Activated CD4-positive, alpha-beta T cell treated with anti-CD3 and anti-CD28 coated beads for 36 hours (primary cell): ENCODE measurements at regions of chr4 and their contacts with region 1.

Region 1: DNA sequence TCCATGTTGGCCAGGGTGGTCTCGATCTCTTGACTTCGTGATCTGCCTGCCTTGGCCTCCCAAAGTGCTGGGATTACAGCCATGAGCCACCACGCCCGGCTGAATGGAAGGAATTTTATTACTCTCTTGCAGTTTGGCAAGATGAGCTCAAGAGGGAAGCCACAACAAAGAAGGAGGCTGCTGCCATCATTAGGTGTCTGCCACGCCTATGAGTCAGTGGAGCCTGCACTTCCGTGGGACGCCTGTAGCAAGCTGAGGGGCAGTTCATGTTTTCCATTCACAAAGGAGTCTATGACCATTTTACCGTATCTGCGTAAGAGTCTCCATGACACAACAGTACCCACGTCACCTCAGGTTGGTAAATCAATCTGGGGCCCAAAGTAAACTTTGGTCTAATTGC is 51.2 kb upstream of the CHRNA9 start:
- DNase-seq: peak; percentile 89
- ATAC-seq: peak; percentile 94
- H3K4me3 Mint-ChIP-seq: peak overlapping the region; percentile 38
- H3K27ac Mint-ChIP-seq: peak overlapping the region; percentile 96
- H3K4me1 Mint-ChIP-seq: peaks cover 60% of the 10 kb centered on the region
- H3K27me3 Mint-ChIP-seq: no peaks in the 10 kb centered on the region

Region 2: DNA sequence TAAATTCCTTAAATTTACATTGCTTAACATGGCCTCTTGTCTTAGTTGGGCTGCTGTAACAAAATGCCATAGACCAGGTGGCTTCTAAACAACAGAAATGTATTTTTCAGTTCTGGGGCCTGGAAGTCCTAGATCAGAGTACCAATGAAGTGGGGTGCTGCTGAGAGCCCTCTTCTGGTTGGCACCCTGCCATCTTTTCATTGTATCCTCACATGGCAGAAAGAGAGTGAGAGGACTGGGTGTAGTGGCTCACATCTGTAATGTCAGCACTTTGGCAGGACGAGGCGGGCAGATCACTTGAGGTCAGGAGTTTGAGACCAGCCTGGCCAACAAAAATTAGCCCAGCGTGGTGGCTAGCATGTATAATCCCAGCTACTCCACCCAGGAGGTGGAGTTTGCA is 889.3 kb before region 1 on chr4:
- CTCF ChIA-PET with region 1: no interaction called
- POLR2A ChIA-PET with region 1: no interaction called
- intact Hi-C with region 1: no loop called
- DNase-seq: no peak
- ATAC-seq: no peak
- H3K4me3 Mint-ChIP-seq: no peak overlapping the region
- H3K27ac Mint-ChIP-seq: no peak overlapping the region
- H3K4me1 Mint-ChIP-seq: no peaks in the 10 kb centered on the region
- H3K27me3 Mint-ChIP-seq: peaks cover 3% of the 10 kb centered on the region

Region 3: DNA sequence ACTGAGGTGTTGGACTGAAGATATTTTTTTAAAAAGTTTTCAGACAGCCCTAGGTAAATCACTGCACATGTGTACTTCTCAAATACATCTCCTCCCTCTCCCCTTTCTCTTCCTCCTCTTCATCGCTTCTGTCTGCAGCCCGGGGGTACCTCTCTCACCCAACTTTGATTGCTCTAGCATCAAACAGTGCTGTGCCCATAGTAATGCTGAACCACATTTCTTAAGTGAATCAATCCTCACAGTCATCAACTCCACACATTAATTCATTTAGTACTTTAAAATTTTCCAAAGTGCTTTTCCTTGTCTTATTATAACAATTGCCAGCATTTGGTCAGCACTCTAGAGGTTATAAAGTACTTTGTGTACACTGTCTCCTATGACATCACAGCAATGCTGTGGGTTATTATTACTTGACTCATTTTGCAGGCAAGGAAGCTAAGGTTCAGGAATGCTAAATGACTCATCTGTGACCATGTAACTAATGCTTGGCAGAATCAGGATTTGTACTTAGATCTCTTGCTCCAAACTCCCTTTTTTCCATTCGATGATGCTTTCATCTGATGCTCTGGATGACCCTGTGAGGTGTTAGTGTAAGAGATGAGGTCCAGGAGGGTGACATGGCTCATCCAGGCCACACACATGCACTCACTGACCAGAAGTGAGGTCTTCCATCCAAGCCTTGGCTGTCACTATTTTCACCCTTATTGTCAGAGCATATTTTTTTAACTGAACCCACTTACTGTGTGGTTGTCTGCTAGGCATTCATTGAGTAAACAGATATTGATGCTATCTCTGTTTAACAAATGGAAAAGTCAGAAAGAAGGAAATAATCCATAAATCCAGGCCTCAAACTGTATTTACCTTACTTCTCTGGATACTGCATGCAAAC is 28.3 kb before region 1 on chr4:
- CTCF ChIA-PET with region 1: interaction called, 6 read pairs
- POLR2A ChIA-PET with region 1: interaction called, 3 read pairs
- intact Hi-C with region 1: loop called in 1 of 2 experiments (anchors 1 kb)
- DNase-seq: no peak
- ATAC-seq: peak; percentile 31
- H3K4me3 Mint-ChIP-seq: no peak overlapping the region
- H3K27ac Mint-ChIP-seq: peak overlapping the region; percentile 44
- H3K4me1 Mint-ChIP-seq: peaks cover 76% of the 10 kb centered on the region
- H3K27me3 Mint-ChIP-seq: no peaks in the 10 kb centered on the region

Region 4: GRCh38 chr4:40265910-40266274 is 18.1 kb before region 1 on chr4:
- CTCF ChIA-PET with region 1: interaction called, 5 read pairs
- POLR2A ChIA-PET with region 1: interaction called, 4 read pairs
- intact Hi-C with region 1: loop called in 1 of 2 experiments (anchors 2 kb)
- DNase-seq: no peak
- ATAC-seq: no peak
- H3K4me3 Mint-ChIP-seq: peak overlapping the region; percentile 65
- H3K27ac Mint-ChIP-seq: peak overlapping the region; percentile 96
- H3K4me1 Mint-ChIP-seq: peaks cover 52% of the 10 kb centered on the region
- H3K27me3 Mint-ChIP-seq: no peaks in the 10 kb centered on the region

Region 5: DNA sequence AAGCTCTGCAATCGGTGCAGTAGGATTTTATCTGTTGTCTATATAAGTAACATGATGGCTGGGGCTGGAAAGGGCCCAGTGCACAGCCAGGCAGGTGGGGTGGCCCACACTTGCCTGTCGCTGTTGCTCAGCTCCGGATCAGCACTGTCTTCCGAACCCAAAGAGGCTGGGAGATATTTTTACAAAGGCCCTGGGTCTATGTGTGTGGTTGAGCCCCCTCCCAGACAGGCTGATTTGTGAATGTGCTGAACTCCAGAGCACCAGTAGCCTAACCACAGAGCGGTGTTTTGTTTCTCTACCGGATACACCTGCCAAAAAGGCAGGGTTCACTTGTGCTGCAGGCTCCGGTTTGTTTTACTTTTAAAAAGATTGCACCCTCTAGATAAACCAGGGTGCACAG is 17.6 kb after region 1 on chr4:
- CTCF ChIA-PET with region 1: interaction called, 9 read pairs
- POLR2A ChIA-PET with region 1: no interaction called
- intact Hi-C with region 1: loop called (anchors 1 to 2 kb)
- DNase-seq: peak; percentile 63
- ATAC-seq: peak; percentile 44
- H3K4me3 Mint-ChIP-seq: peak overlapping the region; percentile 47
- H3K27ac Mint-ChIP-seq: peak overlapping the region; percentile 82
- H3K4me1 Mint-ChIP-seq: peaks cover 85% of the 10 kb centered on the region
- H3K27me3 Mint-ChIP-seq: no peaks in the 10 kb centered on the region

Region 6: GRCh38 chr4:40908702-40909362 is 624.9 kb after region 1 on chr4:
- CTCF ChIA-PET with region 1: no interaction called
- POLR2A ChIA-PET with region 1: no interaction called
- intact Hi-C with region 1: loop called in 1 of 2 experiments (anchors 1 kb)
- DNase-seq: peak; percentile 90
- ATAC-seq: peak; percentile 85
- H3K4me3 Mint-ChIP-seq: peak overlapping the region; percentile 26
- H3K27ac Mint-ChIP-seq: peak overlapping the region; percentile 95
- H3K4me1 Mint-ChIP-seq: peaks cover 36% of the 10 kb centered on the region
- H3K27me3 Mint-ChIP-seq: no peaks in the 10 kb centered on the region